ENCODE measurements at regions of chr2 and their contacts with region 1.

Region 1: DNA sequence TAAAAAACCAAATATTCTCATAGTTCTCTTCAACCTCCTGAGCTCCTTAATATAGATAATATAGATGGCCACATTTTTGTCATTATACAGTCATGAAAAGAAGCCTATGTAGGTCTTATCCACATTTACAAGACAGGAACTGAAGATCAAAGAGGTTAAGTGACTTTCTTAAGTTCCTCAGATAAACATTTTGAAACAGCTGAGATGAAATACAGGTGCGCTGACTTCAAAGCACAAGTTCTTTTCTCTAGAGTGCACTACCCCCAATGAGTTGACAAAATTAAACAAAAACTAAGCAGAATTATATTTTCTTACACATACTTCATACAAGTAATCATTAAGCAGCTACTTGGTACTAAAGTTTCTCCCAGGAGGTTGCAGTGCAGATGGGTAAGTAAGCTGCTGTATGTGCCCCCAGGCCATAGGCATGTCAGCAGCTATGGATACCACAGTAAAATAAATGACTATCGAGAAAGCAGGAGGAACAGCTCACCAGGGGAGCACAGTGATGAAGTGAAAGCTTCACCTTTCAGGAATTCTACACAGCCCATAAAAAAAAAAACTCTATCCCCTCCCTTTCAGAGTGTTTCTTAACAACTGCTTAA is 199.8 kb downstream of the DPP10 start:
- DNase-seq: peak; percentile 86 to 89
- H3K4me3 ChIP-seq: no peak overlapping the region
- H3K4me3 Mint-ChIP-seq: peak overlapping the region; percentile 45
- H3K27ac Mint-ChIP-seq: peak overlapping the region; percentile 94
- H3K4me1 ChIP-seq: peaks cover 31% of the 10 kb centered on the region
- H3K4me1 Mint-ChIP-seq: peaks cover 27% of the 10 kb centered on the region
- H3K27me3 ChIP-seq: no peaks in the 10 kb centered on the region
- H3K27me3 Mint-ChIP-seq: no peaks in the 10 kb centered on the region
- CTCF ChIP-seq: no peak

Region 2: GRCh38 chr2:114598329-114598728 is 43.9 kb before region 1 on chr2:
- CTCF ChIA-PET with region 1: no interaction called
- POLR2A ChIA-PET with region 1: no interaction called
- intact Hi-C with region 1: no loop called
- DNase-seq: no peak
- H3K4me3 ChIP-seq: no peak overlapping the region
- H3K4me3 Mint-ChIP-seq: no peak overlapping the region
- H3K27ac Mint-ChIP-seq: no peak overlapping the region
- H3K4me1 ChIP-seq: no peaks in the 10 kb centered on the region
- H3K4me1 Mint-ChIP-seq: no peaks in the 10 kb centered on the region
- H3K27me3 ChIP-seq: no peaks in the 10 kb centered on the region
- H3K27me3 Mint-ChIP-seq: no peaks in the 10 kb centered on the region
- CTCF ChIP-seq: no peak

Region 3: DNA sequence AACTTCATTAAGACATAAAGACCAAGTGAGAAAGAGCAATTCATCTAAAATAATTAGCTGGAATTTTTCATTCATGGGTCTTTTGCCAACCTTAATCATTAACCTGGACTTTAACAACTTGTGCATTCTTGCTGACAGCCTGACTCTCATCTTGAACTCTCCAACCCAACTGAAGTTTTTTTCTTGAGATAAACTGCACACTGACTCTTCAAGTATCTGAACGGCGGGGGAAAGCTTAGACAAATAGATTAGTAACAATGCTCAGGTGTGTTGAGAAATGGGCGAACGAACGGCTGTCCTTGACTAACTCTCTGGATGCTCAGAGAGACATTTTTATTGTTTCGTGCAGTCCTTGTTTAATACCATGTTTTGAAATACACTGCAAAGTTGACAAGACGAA is 13.8 kb before region 1 on chr2:
- CTCF ChIA-PET with region 1: no interaction called
- POLR2A ChIA-PET with region 1: no interaction called
- intact Hi-C with region 1: loop called (anchors 2 kb)
- DNase-seq: peak in 1 of 2 experiments; percentile 40
- H3K4me3 ChIP-seq: no peak overlapping the region
- H3K4me3 Mint-ChIP-seq: peak overlapping the region; percentile 55
- H3K27ac Mint-ChIP-seq: peak overlapping the region; percentile 39
- H3K4me1 ChIP-seq: peaks cover 14% of the 10 kb centered on the region; the same call in 1 of the 2 replicates
- H3K4me1 Mint-ChIP-seq: peaks cover 19% of the 10 kb centered on the region
- H3K27me3 ChIP-seq: no peaks in the 10 kb centered on the region
- H3K27me3 Mint-ChIP-seq: no peaks in the 10 kb centered on the region
- CTCF ChIP-seq: no peak

Region 4: GRCh38 chr2:114684403-114684802 is 42.1 kb after region 1 on chr2:
- CTCF ChIA-PET with region 1: no interaction called
- POLR2A ChIA-PET with region 1: no interaction called
- intact Hi-C with region 1: no loop called
- DNase-seq: no peak
- H3K4me3 ChIP-seq: no peak overlapping the region
- H3K4me3 Mint-ChIP-seq: no peak overlapping the region
- H3K27ac Mint-ChIP-seq: no peak overlapping the region
- H3K4me1 ChIP-seq: peaks cover 5% of the 10 kb centered on the region; the same call in 1 of the 2 replicates
- H3K4me1 Mint-ChIP-seq: peaks cover 6% of the 10 kb centered on the region
- H3K27me3 ChIP-seq: no peaks in the 10 kb centered on the region
- H3K27me3 Mint-ChIP-seq: no peaks in the 10 kb centered on the region
- CTCF ChIP-seq: no peak

Region 5: DNA sequence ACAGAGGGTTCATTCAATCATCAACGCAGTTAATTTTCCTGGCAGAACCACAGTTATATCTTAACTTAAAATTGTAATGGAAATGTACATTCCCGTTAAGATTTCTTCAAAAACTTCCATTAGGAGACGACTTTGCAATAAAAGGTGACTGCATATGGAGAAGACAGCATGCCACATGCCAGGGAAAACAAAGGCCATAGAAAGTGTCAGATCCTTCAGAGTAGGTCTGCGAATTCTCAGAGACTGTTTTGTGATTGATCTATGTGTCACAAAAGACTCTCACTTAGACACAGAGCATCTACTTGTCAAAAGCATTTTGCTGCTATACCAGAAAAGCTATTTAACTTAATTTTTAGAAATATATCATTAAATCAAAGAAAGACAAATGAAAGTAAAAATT is 74.8 kb after region 1 on chr2:
- CTCF ChIA-PET with region 1: no interaction called
- POLR2A ChIA-PET with region 1: no interaction called
- intact Hi-C with region 1: no loop called
- DNase-seq: no peak
- H3K4me3 ChIP-seq: no peak overlapping the region
- H3K4me3 Mint-ChIP-seq: no peak overlapping the region
- H3K27ac Mint-ChIP-seq: no peak overlapping the region
- H3K4me1 ChIP-seq: no peaks in the 10 kb centered on the region
- H3K4me1 Mint-ChIP-seq: no peaks in the 10 kb centered on the region
- H3K27me3 ChIP-seq: no peaks in the 10 kb centered on the region
- H3K27me3 Mint-ChIP-seq: no peaks in the 10 kb centered on the region
- CTCF ChIP-seq: no peak

Region 6: GRCh38 chr2:115099927-115100326 is 457.7 kb after region 1 on chr2:
- CTCF ChIA-PET with region 1: no interaction called
- POLR2A ChIA-PET with region 1: no interaction called
- intact Hi-C with region 1: no loop called
- DNase-seq: no peak
- H3K4me3 ChIP-seq: no peak overlapping the region
- H3K4me3 Mint-ChIP-seq: no peak overlapping the region
- H3K27ac Mint-ChIP-seq: no peak overlapping the region
- H3K4me1 ChIP-seq: no peaks in the 10 kb centered on the region
- H3K4me1 Mint-ChIP-seq: no peaks in the 10 kb centered on the region
- H3K27me3 ChIP-seq: no peaks in the 10 kb centered on the region
- H3K27me3 Mint-ChIP-seq: no peaks in the 10 kb centered on the region
- CTCF ChIP-seq: no peak